Caco-2 (cell line): ENCODE measurements at regions of chr5 and their contacts with region 1.

Region 1: DNA sequence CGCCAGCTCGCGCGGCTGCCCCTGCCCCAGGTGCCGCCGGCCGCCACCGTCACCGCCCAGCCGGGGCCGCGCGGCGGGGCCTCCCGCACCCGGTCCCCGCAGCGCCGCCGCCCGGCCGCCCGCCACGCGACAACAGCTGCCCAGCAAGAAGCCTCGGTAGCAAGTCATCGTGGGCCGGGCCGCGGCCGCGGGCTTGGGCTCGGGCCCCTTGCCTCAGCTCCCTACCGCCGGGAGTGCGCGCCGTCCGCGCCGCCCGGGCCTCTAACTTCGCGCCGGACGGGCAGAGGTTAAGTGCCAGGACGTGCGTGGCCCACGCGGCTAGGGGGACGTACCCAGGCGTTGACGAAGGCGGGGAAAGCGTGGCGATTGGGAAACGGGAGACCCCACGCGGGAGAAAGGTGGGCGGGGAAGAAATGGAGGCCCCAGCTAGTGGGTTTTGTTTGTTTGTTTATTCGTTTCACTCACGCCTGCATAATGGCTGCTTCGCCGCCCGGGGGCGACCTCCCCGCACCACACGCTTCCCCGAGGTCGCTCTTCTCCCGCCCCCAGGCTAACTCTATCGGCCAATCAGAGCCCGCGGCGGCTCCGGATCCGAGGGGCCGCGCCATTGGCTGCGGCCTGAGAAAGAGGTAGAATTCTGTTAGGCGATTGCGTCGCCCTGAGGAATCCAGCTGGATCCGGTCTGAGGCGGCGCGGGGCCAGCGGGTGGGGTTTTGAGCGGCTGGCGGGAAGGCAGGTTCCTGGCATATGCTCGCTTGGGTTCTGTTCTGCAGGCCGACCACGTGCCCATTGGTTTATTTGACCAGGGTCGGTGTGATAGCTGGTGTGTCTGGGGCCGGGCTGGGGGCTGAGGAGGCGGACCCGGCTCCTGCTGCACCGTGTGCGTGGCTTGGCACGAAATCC is at the start of gene NADK2:
- DNase-seq: peak; percentile 97 to 98
- H3K4me3 ChIP-seq: peak within 1 kb of the TSS; percentile 90
- H3K4me3 Mint-ChIP-seq: peak within 1 kb of the TSS; percentile 87
- H3K27ac Mint-ChIP-seq: peak within 1 kb of the TSS; percentile 99
- H3K4me1 ChIP-seq: peaks cover 44% of the 10 kb centered on the region
- H3K4me1 Mint-ChIP-seq: peaks cover 50% of the 10 kb centered on the region
- H3K27me3 ChIP-seq: no peaks in the 10 kb centered on the region
- H3K27me3 Mint-ChIP-seq: no peaks in the 10 kb centered on the region
- CTCF ChIP-seq: peak; percentile 64 to 80
- total RNA-seq, gene NADK2: 71.6 and 79.4 TPM in 2 replicates

Region 2: DNA sequence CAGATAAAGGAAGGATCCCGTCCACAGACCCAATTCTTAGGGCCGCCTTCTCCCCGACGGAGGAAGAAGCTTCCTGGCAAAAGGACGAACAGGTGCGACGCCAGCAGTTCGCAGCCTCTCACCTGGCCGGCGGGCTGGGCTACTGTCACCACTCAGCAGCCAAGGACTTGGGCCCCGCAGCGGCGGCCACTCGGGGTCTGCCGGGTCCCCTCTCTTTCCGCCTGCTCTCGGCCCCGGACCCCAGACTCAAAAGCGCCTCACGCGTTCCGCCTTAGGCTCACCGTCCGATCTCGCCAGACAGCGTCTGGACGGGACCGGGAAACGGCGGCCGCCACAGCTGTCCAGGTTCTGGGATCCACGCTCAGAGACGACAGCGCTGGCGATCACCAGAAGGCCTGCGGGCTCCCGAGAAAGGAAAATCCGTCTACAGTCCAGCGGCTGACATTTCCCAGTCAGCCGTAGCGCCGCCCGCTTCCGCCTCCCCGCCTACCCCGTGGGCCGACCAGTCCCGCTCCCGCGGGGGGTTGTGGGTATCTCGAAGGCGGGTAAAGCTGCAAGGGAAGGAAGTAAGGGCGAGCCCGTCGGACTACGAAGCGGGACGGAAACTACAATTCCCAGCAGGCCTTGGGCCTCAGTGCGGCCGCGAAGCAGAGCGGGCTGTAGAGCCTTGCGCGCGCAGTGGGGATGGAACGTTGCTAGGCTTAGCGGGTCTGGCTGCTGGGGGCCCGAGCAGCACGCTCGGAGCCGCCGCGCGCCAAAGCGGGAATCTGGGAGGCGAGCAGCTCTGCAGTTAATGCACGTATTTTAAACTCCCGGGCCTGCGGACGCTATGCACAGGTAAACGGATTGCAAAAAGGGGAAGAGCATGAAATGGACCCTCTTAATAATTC is 90.2 kb before region 1 on chr5 and contains the starts of genes LMBRD2 and SKP2:
- CTCF ChIA-PET with region 1: interaction called, 3 read pairs
- POLR2A ChIA-PET with region 1: no interaction called
- intact Hi-C with region 1: loop called (anchors 2 kb)
- DNase-seq: peak; percentile 98
- H3K4me3 ChIP-seq: peak within 1 kb of the TSS; percentile 98
- H3K4me3 Mint-ChIP-seq: peak within 1 kb of the TSS; percentile 75
- H3K27ac Mint-ChIP-seq: peak within 1 kb of the TSS; percentile 85
- H3K4me1 ChIP-seq: peaks cover 59% of the 10 kb centered on the region
- H3K4me1 Mint-ChIP-seq: peaks cover 54% of the 10 kb centered on the region
- H3K27me3 ChIP-seq: no peaks in the 10 kb centered on the region
- H3K27me3 Mint-ChIP-seq: no peaks in the 10 kb centered on the region
- CTCF ChIP-seq: no peak
- total RNA-seq, gene LMBRD2: 11.5 and 15.2 TPM in 2 replicates
- total RNA-seq, gene SKP2: 192 and 230 TPM in 2 replicates

Region 3: DNA sequence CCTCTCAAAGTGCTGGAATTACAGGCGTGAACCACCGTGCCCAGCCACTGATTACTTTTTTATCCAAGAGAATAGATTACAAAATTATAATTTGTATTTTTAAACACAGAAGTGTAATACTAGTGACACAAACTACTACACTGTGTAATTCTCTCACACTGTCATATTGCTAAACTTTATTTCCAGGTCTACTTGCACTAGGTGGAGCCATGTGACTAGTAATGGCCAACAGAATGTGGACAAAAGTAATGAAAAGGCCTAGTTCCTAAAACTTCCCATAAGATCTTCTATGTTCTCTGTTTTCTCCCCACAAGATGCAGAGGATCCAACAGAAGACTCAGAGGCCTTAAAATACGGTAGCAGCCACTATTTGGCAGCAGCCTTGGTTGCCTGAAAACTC is 27.4 kb before region 1 on chr5:
- CTCF ChIA-PET with region 1: interaction called, 9 read pairs
- POLR2A ChIA-PET with region 1: interaction called, 4 read pairs
- intact Hi-C with region 1: loop called (anchors 1 kb)
- DNase-seq: peak in 1 of 2 experiments; percentile 27
- H3K4me3 ChIP-seq: no peak overlapping the region
- H3K4me3 Mint-ChIP-seq: no peak overlapping the region
- H3K27ac Mint-ChIP-seq: no peak overlapping the region
- H3K4me1 ChIP-seq: no peaks in the 10 kb centered on the region; the same call in 1 of the 2 replicates
- H3K4me1 Mint-ChIP-seq: peaks cover 8% of the 10 kb centered on the region
- H3K27me3 ChIP-seq: no peaks in the 10 kb centered on the region
- H3K27me3 Mint-ChIP-seq: no peaks in the 10 kb centered on the region
- CTCF ChIP-seq: peak in 1 of 2 experiments; percentile 22

Region 4: DNA sequence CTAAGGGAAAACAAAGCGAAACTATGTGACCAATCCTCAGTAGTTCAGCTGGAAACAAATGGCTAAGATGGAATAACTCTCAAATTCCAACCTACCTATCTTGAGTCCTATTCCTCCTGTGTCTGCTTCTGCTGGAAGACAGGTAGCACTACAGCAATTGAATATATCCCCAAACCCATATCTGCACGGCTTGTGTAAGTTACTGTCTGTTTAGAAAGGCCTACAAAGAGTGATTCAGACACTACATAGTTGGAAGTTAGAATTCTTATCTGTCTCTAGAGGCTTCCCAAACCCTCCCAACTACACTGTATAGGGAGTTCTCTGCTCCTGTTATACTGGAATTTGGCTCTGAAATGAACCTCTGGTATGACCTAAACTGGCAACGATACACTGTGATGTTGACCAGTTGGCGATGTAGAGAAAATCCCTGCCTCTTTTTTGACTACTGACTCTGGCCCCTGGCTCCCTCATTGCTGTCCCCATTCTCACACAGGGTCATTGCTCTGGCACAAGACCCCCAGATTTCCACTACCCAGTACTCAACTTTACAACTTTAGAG is 22.4 kb after region 1 on chr5:
- CTCF ChIA-PET with region 1: interaction called, 3 read pairs
- POLR2A ChIA-PET with region 1: interaction called, 5 read pairs
- intact Hi-C with region 1: loop called (anchors 1 kb)
- DNase-seq: no peak
- H3K4me3 ChIP-seq: no peak overlapping the region
- H3K4me3 Mint-ChIP-seq: no peak overlapping the region
- H3K27ac Mint-ChIP-seq: no peak overlapping the region
- H3K4me1 ChIP-seq: no peaks in the 10 kb centered on the region
- H3K4me1 Mint-ChIP-seq: no peaks in the 10 kb centered on the region
- H3K27me3 ChIP-seq: no peaks in the 10 kb centered on the region
- H3K27me3 Mint-ChIP-seq: no peaks in the 10 kb centered on the region
- CTCF ChIP-seq: no peak

Region 5: DNA sequence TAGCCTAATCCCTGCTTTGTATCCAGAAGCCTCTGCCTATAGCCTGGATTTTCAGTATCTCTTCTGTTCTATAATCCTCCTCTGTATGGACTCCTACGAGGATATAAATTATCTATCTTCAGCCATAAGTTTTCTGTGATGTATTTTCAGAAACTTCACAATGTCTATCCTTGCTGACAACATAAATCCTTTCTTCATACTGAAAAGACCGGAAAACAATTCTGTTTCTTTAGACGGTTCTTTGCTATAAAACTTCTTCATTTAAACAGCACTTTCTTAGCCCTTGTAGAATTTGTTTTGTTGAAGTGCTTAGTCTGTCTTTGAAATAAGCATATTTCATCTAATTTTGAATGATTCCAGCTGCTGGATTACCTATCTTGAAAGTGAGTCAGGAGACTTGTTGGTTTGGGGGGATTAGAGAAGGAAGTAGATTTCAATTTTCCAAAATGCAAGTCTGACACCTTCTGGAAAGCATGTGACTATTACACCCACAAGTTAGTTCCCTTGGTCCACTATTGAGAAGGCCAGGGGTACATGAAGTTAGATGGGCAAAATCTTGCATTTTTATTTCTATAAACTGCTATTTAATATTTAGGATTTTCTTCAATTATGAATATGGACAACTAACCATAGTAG is 156.1 kb after region 1 on chr5:
- CTCF ChIA-PET with region 1: interaction called, 3 read pairs
- POLR2A ChIA-PET with region 1: no interaction called
- intact Hi-C with region 1: loop called (anchors 1 kb)
- DNase-seq: peak in 1 of 2 experiments; percentile 48
- H3K4me3 ChIP-seq: no peak overlapping the region
- H3K4me3 Mint-ChIP-seq: no peak overlapping the region
- H3K27ac Mint-ChIP-seq: no peak overlapping the region
- H3K4me1 ChIP-seq: peaks cover 46% of the 10 kb centered on the region
- H3K4me1 Mint-ChIP-seq: peaks cover 35% of the 10 kb centered on the region
- H3K27me3 ChIP-seq: no peaks in the 10 kb centered on the region
- H3K27me3 Mint-ChIP-seq: no peaks in the 10 kb centered on the region
- CTCF ChIP-seq: peak; percentile 50 to 64

Region 6: DNA sequence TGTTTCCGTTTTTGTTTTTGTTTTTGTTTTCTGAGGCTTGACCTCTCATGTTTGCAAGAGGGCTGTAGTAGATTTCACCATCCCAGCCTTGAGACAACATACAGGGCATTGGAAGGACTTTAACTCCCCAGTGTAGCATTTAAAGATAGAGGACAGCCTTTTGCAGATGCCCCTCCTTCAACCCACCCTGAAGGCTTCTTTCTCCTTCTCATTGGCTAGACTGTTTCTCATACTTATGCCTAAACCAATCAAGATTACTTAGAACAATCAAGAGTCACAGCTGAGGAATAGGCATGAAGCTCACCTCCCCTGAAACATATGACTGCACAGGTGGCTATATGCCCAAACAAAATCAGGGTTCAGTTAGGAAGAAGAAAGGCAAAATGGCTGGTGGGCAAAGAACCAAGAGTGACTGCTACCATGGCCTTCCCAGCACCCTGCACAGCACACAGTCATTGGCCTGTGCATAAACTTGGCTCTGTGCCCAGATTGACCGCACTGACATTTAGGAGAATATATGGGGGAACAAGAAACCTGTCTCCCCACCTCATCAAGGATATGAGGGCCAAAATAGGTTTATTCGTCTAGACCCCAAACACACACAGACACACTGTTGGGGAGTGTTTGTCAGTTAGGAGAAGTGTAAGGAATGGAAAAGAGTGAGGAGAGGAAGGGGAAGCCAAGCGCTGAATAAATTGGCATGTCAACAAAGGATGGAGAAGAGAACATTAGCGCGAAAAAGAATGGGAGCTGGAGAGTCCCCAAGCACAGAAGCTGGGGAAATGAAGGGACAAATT is 197.1 kb after region 1 on chr5:
- CTCF ChIA-PET with region 1: no interaction called
- POLR2A ChIA-PET with region 1: no interaction called
- intact Hi-C with region 1: no loop called
- DNase-seq: no peak
- H3K4me3 ChIP-seq: no peak overlapping the region
- H3K4me3 Mint-ChIP-seq: no peak overlapping the region
- H3K27ac Mint-ChIP-seq: peak overlapping the region; percentile 0
- H3K4me1 ChIP-seq: peaks cover 64% of the 10 kb centered on the region
- H3K4me1 Mint-ChIP-seq: peaks cover 44% of the 10 kb centered on the region
- H3K27me3 ChIP-seq: no peaks in the 10 kb centered on the region
- H3K27me3 Mint-ChIP-seq: no peaks in the 10 kb centered on the region
- CTCF ChIP-seq: no peak

Region 7: DNA sequence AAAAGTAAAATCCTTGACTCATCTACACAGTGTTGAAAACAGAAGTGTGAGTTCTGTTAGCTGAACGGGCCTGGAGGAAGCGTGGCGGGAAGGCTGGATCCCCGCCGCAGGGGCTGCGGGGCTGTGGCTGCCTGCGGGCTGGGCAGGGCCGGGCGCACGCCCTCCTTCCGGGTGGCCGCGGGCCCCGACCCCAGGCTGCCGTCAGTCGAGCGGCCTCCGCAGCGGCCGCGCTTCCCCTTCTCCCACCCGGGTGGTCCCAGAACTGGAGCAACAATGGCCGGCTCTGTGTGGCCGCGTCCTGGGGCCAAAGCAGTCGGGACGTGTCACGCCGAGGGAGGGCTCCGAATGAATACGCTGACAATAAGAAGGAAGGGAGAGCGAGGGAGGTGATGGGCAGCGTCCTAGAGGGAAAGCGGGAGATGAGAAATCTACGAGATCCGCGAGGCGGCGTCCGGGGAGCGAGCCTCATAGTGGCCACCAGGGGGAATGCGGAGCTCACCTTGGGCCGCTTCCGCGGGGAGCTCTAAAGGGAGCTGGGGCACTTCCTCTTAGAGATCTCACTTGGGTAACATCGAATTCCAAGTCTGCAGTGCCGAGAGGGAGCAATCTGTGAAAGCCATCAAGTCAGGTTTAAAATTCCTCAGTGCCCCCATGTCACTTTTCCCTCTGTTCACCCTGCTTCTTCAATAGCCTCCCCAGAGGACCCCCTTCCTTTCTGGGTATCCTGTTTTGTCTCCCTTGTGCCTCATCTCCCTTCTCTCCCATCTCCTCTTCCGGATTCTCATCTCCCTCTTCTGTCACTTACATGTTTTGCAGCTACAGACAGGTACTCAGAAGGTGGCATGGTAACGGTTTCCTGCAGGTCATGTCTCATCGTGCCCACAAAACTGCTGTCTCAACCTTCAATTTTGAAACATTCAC is 448.4 kb after region 1 on chr5:
- CTCF ChIA-PET with region 1: no interaction called
- POLR2A ChIA-PET with region 1: no interaction called
- intact Hi-C with region 1: loop called (anchors 10 kb)
- DNase-seq: peak; percentile 90 to 91
- H3K4me3 ChIP-seq: peak overlapping the region; percentile 71
- H3K4me3 Mint-ChIP-seq: peak overlapping the region; percentile 75
- H3K27ac Mint-ChIP-seq: peak overlapping the region; percentile 28
- H3K4me1 ChIP-seq: peaks cover 14% of the 10 kb centered on the region; the same call in 1 of the 2 replicates
- H3K4me1 Mint-ChIP-seq: peaks cover 10% of the 10 kb centered on the region
- H3K27me3 ChIP-seq: no peaks in the 10 kb centered on the region
- H3K27me3 Mint-ChIP-seq: no peaks in the 10 kb centered on the region
- CTCF ChIP-seq: peak; percentile 80 to 91